ENCODE measurements at regions of chr17 and their contacts with region 1.

Region 1: GRCh38 chr17:28763804-28764266 is 20.0 kb downstream of the TRAF4 start:
- H3K4me3 ChIP-seq: no peak overlapping the region
- H3K27ac ChIP-seq: no peak overlapping the region
- H3K4me1 ChIP-seq: no peaks in the 10 kb centered on the region; the same call in 1 of the 2 replicates
- CTCF ChIP-seq: peak; percentile 51; the same call in 1 of the 2 replicates

Region 2: DNA sequence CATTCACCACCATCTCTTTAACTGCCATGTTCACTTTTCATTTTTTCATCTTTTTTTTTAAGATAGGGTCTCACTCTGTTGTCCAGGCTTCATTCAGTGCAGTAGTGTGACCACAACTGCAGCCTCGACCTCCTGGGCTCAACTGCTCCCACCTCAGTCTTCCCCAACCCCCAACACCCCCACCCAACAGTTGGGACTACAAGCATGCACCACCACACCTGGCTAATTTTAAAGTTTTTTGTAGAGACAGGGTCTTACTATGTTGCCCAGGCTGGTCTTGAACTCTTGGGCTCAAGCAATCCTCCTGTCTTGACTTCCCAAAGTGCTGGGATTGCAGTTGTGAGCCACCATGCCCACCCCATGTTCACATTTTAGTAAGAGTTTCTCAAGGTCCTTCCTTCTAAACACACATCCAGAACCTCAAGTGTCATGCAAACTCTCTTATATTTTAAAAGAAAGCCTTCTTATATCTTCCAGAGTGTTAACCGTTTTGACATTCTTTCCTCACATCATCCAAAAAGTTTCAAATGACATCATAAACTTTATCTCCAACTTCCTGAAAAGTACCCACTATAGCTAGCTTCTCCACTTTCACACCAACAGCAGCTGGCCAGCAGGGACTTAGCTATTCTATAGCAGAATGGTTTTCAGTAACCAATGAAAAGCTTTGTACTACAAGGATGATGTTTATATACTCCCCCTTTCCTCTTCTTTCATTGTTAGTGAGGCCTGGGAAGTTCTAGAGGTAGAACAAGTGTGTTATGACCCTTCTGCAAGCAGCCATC is 29.2 kb after region 1 on chr17:
- CTCF ChIA-PET with region 1: interaction called, 62 read pairs
- POLR2A ChIA-PET with region 1: no interaction called
- H3K4me3 ChIP-seq: no peak overlapping the region
- H3K27ac ChIP-seq: no peak overlapping the region
- H3K4me1 ChIP-seq: peaks cover 6% of the 10 kb centered on the region; the same call in 1 of the 2 replicates
- CTCF ChIP-seq: no peak

Region 3: GRCh38 chr17:28834420-28834819 is 70.6 kb after region 1 on chr17:
- CTCF ChIA-PET with region 1: interaction called, 52 read pairs
- POLR2A ChIA-PET with region 1: interaction called, 3 read pairs
- H3K4me3 ChIP-seq: no peak overlapping the region
- H3K27ac ChIP-seq: no peak overlapping the region
- H3K4me1 ChIP-seq: no peaks in the 10 kb centered on the region
- CTCF ChIP-seq: no peak

Region 4: GRCh38 chr17:28861393-28862203 is 97.8 kb after region 1 on chr17:
- CTCF ChIA-PET with region 1: interaction called, 23 read pairs
- POLR2A ChIA-PET with region 1: no interaction called
- H3K4me3 ChIP-seq: no peak overlapping the region
- H3K27ac ChIP-seq: no peak overlapping the region
- H3K4me1 ChIP-seq: no peaks in the 10 kb centered on the region
- CTCF ChIP-seq: no peak

Region 5: DNA sequence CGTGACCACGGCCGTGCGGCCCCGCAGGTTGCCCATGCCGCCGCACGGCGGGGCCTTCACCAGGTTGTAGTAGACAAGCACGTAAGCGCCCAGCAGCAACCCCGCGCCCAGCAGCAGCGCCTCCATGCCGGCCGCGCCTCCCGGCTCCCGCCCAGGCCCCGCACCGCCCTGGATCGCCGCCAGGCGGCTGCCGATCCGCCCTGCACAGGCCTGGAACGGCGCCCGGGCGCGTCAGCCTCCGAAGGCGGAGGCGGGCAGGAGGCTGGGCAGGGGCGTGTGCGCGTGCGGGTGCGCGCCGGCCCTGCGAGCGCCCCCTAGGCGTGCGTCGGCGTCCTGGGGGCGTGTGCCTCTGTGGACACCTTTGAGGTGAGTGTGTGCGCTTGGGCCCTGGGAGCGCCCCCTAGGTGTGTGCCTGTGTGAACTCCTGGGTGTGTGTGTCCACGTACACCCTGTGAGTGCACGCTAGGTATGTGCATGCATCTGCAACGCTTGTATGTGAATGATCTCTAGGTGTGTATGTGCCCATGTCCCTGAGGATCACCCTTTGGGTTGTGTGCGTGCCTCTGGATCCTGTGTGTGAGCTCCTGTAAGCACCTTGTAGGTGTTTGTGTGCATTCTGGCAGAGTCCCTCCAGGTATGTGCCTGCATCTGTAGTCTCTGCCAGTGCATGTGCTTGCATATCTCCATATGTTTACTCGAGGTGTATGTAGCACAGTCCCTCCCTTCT is 139.1 kb after region 1 on chr17 and contains the start of gene DHRS13:
- CTCF ChIA-PET with region 1: interaction called, 142 read pairs
- POLR2A ChIA-PET with region 1: no interaction called
- H3K4me3 ChIP-seq: peak within 1 kb of the TSS; percentile 65
- H3K27ac ChIP-seq: peak within 1 kb of the TSS; percentile 77
- H3K4me1 ChIP-seq: peaks cover 1% of the 10 kb centered on the region; the same call in 1 of the 2 replicates
- CTCF ChIP-seq: peak; percentile 99

Region 6: GRCh38 chr17:28951991-28952975 is 188.4 kb after region 1 on chr17:
- CTCF ChIA-PET with region 1: interaction called, 48 read pairs
- POLR2A ChIA-PET with region 1: no interaction called
- H3K4me3 ChIP-seq: peak overlapping the region; percentile 73
- H3K27ac ChIP-seq: peak overlapping the region; percentile 87
- H3K4me1 ChIP-seq: peaks cover 7% of the 10 kb centered on the region
- CTCF ChIP-seq: no peak